Aorta (tissue), 5 donors: ENCODE measurements at regions of chr14 and their contacts with region 1.

Region 1: GRCh38 chr14:60349663-60350365 is 100.8 kb downstream of the PPM1A start:
- DNase-seq: no peak
- ATAC-seq: no peak
- H3K4me3 ChIP-seq: peak overlapping the region in 1 of 2 donors; percentile 5
- H3K27ac ChIP-seq: no peak overlapping the region
- H3K4me1 ChIP-seq: no peaks in the 10 kb centered on the region
- H3K27me3 ChIP-seq: peaks cover 0 to 2% of the 10 kb centered on the region in 2 donors

Region 2: GRCh38 chr14:58597041-58597440 is 1752.8 kb before region 1 on chr14:
- intact Hi-C with region 1: no loop called
- DNase-seq: no peak
- ATAC-seq: no peak
- H3K4me3 ChIP-seq: no peak overlapping the region
- H3K27ac ChIP-seq: no peak overlapping the region
- H3K4me1 ChIP-seq: no peaks in the 10 kb centered on the region
- H3K27me3 ChIP-seq: no peaks in the 10 kb centered on the region

Region 3: GRCh38 chr14:60085085-60085484 is 264.7 kb before region 1 on chr14:
- intact Hi-C with region 1: no loop called
- DNase-seq: no peak
- ATAC-seq: no peak
- H3K4me3 ChIP-seq: no peak overlapping the region
- H3K27ac ChIP-seq: no peak overlapping the region
- H3K4me1 ChIP-seq: no peaks in the 10 kb centered on the region
- H3K27me3 ChIP-seq: no peaks in the 10 kb centered on the region

Region 4: DNA sequence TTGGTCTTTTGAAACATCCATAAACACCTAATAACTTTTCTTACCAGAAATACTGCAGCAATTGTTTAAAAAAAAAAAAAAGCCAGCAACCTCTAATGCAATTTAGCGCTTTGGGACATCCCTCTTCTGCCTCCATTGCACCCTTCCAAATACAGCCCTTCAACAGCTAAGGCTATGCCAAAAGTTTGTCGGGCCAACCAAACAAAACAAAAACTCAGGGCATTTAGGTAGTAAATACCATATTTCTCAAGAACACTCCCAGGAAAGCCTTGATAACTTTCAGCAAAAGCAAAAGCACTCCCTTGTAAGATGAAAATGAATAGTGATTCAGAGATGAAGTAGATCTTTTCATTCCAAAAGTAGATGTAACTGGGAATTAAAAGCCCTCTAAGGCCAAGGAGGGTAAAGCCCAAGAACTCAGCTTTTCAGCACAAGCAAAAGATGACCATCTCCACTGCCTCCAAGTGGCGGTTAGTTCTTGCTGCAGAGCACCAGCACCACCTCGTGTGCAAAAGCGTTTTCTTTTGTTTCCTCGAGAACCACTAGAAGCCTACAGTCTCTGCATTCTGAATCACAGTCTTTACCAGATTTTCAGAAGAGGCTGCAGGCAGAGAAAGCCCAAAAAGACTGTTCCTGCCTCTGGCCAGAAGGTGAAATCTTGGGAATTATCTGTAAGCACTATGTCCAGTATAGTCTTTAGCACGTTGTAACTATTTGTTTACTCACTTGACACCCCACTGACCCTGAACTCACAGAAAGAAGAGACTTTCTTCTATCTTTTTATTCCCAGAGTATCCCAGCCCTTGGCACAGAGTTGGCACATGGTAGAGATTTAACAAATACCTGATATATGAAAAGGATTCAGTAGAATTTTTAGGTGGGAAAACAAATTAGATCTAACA is 212.3 kb after region 1 on chr14:
- intact Hi-C with region 1: loop called (anchors 1 to 5 kb)
- DNase-seq: peak in 1 of 2 donors; percentile 63
- ATAC-seq: peak; percentile 89
- H3K4me3 ChIP-seq: no peak overlapping the region
- H3K27ac ChIP-seq: no peak overlapping the region
- H3K4me1 ChIP-seq: peaks cover 0 to 3% of the 10 kb centered on the region in 2 donors
- H3K27me3 ChIP-seq: no peaks in the 10 kb centered on the region

Region 5: DNA sequence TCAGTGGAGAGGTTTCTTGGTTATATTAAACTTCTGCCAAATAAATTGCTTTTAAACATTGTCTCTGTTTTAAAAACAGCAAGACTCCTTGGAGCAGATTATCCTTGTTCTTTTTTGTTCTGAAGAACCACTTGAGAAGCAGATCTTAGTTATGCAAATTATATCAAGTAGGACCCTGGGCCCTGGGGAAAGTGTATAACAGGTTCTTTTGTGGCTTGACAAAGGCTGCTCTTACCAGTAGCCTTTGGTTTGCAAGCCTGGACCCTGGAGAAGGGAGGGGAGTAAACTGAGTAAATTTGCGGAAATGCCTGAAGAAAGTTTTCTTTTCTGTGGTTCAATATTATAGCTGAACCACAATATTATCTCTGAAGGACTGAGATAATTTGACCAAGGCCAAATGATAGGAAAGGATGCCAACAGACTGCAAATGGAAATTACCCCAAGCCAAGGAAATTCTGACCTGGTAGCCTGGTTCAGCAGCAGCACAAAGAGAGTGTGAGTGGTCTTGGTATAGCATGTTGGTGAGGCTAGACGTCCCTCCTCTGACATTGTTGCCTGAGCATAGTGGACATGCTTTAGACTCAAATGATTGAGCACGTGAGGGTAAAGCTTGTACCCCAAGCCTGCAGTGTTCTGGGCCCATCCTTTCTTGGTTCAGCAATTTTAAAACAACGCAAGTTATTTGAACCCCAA is 329.9 kb after region 1 on chr14:
- intact Hi-C with region 1: no loop called
- DNase-seq: no peak
- ATAC-seq: no peak
- H3K4me3 ChIP-seq: no peak overlapping the region
- H3K27ac ChIP-seq: no peak overlapping the region
- H3K4me1 ChIP-seq: no peaks in the 10 kb centered on the region
- H3K27me3 ChIP-seq: no peaks in the 10 kb centered on the region

Region 6: GRCh38 chr14:61252369-61253063 is 902.7 kb after region 1 on chr14:
- intact Hi-C with region 1: loop called in 1 of 2 experiments (anchors 10 kb)
- DNase-seq: peak in 1 of 2 donors; percentile 83
- ATAC-seq: peak; percentile 94
- H3K4me3 ChIP-seq: no peak overlapping the region
- H3K27ac ChIP-seq: no peak overlapping the region
- H3K4me1 ChIP-seq: no peaks in the 10 kb centered on the region
- H3K27me3 ChIP-seq: no peaks in the 10 kb centered on the region